Activated naive CD4-positive, alpha-beta T cell treated with anti-CD3 and anti-CD28 coated beads for 36 hours (primary cell): ENCODE measurements at regions of chr19 and their contacts with region 1.

Region 1: DNA sequence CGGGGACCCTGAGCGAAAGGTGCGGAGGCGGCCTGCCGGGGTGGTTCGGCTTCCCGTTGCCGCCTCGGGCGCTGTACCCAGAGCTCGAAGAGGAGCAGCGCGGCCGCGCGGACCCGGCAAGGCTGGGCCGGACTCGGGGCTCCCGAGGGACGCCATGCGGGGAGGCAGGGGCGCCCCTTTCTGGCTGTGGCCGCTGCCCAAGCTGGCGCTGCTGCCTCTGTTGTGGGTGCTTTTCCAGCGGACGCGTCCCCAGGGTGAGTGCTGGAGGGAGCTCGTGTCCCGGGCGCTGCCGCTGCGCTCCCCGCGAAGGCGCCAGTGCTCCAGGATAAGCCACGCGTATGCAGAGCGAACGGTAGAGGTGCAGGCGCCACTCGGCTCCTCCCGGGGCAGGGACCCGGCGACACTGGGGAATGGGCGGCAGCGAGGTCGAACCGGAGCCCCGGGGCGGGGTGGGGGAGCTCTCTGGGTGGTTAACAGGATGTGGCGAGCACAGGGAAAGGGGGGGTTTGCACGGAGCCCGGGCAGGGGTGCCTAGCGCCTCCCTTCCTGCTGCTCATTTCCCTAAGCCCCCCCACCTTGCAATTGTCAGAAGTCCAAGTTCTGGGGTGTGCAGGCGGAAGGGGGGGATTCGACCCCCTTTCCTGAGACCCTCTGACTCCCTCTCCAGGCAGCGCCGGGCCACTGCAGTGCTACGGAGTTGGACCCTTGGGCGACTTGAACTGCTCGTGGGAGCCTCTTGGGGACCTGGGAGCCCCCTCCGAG is at the start of gene IL27RA:
- DNase-seq: peak; percentile 84
- H3K4me3 Mint-ChIP-seq: peak within 1 kb of the TSS; percentile 88
- H3K27ac Mint-ChIP-seq: peak within 1 kb of the TSS; percentile 92
- H3K4me1 Mint-ChIP-seq: peaks cover 26% of the 10 kb centered on the region
- H3K27me3 Mint-ChIP-seq: no peaks in the 10 kb centered on the region
- total RNA-seq, gene IL27RA: 59.3 to 59.4 TPM

Region 2: GRCh38 chr19:13905938-13906904 is 125.7 kb before region 1 on chr19 and contains the starts of genes BRME1 and CC2D1A:
- CTCF ChIA-PET with region 1: interaction called, 5 read pairs
- intact Hi-C with region 1: loop called (anchors 5 kb)
- DNase-seq: peak; percentile 97
- H3K4me3 Mint-ChIP-seq: peak within 1 kb of the TSS; percentile 86
- H3K27ac Mint-ChIP-seq: peak within 1 kb of the TSS; percentile 88
- H3K4me1 Mint-ChIP-seq: peaks cover 30% of the 10 kb centered on the region
- H3K27me3 Mint-ChIP-seq: no peaks in the 10 kb centered on the region
- total RNA-seq, gene BRME1: 5.8 to 5.9 TPM
- total RNA-seq, gene CC2D1A: 27.4 to 28.6 TPM